ENCODE measurements at regions of chr11 and their contacts with region 1.

Region 1: GRCh38 chr11:62905927-62906531 is 15.1 kb downstream of the CHRM1 start:
- H3K4me3 ChIP-seq: no peak overlapping the region
- H3K27ac ChIP-seq: no peak overlapping the region
- H3K4me1 ChIP-seq: no peaks in the 10 kb centered on the region
- CTCF ChIP-seq: peak; percentile 96

Region 2: DNA sequence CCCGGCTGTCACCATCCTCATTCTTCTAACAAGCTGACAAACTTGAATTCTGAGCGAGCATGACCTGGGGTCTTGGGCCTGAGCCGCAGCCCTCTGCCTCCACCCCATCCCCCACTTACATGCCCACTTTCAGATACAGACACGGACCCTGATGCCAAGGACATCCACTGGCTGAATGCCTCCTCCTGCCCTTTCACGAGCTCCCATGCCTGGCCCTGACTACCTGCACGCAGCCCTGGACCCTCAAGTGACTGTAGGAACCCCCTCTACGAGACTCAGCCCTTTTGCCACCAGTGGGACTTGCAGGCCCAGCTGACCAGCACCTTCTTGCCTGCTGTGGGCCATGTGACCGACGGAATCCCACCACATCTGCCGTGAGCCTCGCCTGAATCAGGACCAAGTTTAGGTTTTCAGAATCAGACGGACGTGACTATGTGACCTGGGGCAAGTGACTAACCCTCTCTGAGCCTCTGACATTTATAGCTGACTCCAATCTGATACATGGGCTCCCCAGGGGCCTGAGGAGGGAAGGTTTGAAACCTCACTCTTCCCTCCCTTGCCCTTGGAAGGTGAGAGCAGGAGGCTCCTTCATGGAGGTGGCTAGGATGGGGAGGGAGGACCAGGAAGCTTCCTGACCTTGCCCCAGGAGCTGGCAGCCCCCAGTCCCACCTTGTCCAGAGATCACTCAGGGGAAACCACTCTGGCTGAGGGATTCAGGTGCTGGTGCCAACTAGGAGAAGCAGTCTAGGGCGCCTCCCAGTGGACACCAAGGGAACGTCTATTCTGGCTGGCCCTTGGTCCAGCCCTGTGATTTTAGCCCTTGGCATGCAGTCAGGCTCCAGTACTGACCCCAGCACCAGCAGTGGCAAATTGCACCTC is 1278.2 kb before region 1 on chr11:
- CTCF ChIA-PET with region 1: no interaction called
- POLR2A ChIA-PET with region 1: no interaction called
- H3K4me3 ChIP-seq: no peak overlapping the region
- H3K27ac ChIP-seq: no peak overlapping the region
- H3K4me1 ChIP-seq: no peaks in the 10 kb centered on the region
- CTCF ChIP-seq: 0 out of 2 replicates have a peak, but pooled peaks have one; percentile 31

Region 3: GRCh38 chr11:62678770-62679696 is 227.0 kb before region 1 on chr11 and contains the start of gene UBXN1:
- CTCF ChIA-PET with region 1: no interaction called
- POLR2A ChIA-PET with region 1: no interaction called
- H3K4me3 ChIP-seq: peak within 1 kb of the TSS; percentile 90
- H3K27ac ChIP-seq: peak within 1 kb of the TSS; percentile 62
- H3K4me1 ChIP-seq: peaks cover 8% of the 10 kb centered on the region
- CTCF ChIP-seq: no peak

Region 4: DNA sequence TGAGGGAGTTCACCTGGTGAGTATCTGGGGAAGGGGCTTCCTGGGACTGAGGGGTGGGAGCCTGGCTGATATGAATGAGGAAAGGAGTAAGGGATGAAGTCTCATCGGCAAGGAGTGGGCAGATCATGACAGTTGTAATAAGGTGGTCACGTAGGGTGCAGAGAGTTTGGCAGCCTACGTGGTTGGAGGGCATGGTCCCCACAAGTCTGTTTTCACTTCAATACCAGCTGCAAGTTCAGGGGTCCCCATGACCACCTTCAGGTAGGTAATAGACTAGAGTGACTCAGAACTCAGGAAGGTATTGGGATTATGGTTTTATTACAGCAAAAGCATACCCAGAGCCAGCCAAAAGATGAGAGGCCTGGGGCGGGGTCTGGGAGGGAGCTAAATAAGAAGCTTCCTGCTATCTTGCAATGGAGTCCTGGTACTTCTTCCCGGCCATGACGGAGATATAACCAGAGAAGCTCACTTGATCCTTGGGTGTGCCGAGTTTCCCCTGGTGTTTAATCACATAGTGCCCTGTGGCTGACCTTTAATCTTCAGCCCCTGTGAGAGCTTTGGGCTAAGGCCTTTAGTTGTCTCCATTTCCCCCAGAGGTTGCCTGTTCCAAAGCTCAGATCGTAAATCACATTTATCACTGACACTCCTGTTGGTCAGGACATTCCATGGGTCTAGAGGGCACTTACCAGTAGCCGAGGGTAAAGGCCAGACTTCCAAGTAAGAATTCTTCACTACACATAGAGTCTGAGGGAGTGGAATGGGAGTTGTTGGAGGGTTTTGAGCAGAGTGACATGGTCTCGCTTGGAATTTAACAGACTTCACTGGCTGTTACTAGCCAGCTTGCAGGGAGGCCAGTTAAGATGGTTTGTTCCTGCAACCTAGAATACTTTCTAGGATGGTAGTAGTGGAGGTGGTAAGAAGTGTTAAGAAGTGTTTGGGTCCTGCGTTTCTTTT is 16.3 kb before region 1 on chr11:
- CTCF ChIA-PET with region 1: interaction called, 22 read pairs
- POLR2A ChIA-PET with region 1: interaction called, 4 read pairs
- H3K4me3 ChIP-seq: no peak overlapping the region
- H3K27ac ChIP-seq: no peak overlapping the region
- H3K4me1 ChIP-seq: no peaks in the 10 kb centered on the region
- CTCF ChIP-seq: no peak

Region 5: GRCh38 chr11:62931499-62932278 is 25.7 kb after region 1 on chr11:
- CTCF ChIA-PET with region 1: interaction called, 13 read pairs
- POLR2A ChIA-PET with region 1: no interaction called
- H3K4me3 ChIP-seq: no peak overlapping the region
- H3K27ac ChIP-seq: no peak overlapping the region
- H3K4me1 ChIP-seq: no peaks in the 10 kb centered on the region
- CTCF ChIP-seq: no peak

Region 6: GRCh38 chr11:63007920-63008319 is 101.9 kb after region 1 on chr11:
- CTCF ChIA-PET with region 1: interaction called, 19 read pairs
- POLR2A ChIA-PET with region 1: no interaction called
- H3K4me3 ChIP-seq: no peak overlapping the region
- H3K27ac ChIP-seq: no peak overlapping the region
- H3K4me1 ChIP-seq: no peaks in the 10 kb centered on the region
- CTCF ChIP-seq: no peak

Region 7: DNA sequence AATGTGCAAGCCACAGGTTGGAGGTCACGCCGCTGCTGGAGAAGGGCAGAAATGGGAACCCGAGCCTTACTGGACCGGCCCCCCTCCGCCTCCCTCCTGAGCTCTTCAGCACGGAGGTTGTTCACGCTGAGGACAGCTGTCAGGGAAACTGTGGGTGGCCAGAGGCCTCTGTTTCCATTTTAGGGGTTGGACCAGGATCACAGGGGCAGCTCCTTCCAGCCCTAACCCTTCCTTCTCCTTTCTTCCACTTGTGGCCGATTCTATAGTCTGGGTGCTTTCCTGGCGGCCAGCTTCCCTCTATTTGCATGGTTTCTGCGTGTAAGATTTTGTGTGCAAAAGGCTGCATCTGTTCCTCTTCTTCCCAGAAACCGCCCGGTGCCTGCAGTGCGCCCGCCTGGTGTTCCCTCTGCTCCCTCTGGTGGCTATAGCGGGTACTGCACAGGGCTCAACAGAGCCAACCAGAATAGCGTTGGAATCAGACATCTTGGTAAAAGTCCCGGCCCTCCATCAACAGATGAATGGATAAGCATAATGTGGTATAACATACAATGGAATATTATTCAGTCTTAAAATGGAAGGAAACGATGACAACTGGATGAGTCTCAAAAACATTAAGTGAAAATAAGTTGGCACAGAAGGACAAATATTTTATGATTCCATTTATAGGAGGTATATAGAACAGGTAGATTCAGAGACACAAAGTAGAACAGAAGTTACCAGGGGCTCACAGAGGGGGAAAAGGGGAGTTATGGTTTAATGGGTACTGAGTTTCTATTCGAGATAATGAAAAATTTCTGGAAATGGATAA is 118.0 kb after region 1 on chr11:
- CTCF ChIA-PET with region 1: interaction called, 450 read pairs
- POLR2A ChIA-PET with region 1: interaction called, 6 read pairs
- H3K4me3 ChIP-seq: no peak overlapping the region
- H3K27ac ChIP-seq: no peak overlapping the region
- H3K4me1 ChIP-seq: no peaks in the 10 kb centered on the region; the same call in 1 of the 2 replicates
- CTCF ChIP-seq: peak; percentile 74

Region 8: GRCh38 chr11:63080682-63081081 is 174.7 kb after region 1 on chr11:
- CTCF ChIA-PET with region 1: no interaction called
- POLR2A ChIA-PET with region 1: no interaction called
- H3K4me3 ChIP-seq: no peak overlapping the region
- H3K27ac ChIP-seq: no peak overlapping the region
- H3K4me1 ChIP-seq: no peaks in the 10 kb centered on the region
- CTCF ChIP-seq: no peak

Region 9: GRCh38 chr11:63212742-63213141 is 306.7 kb after region 1 on chr11:
- CTCF ChIA-PET with region 1: interaction called, 25 read pairs
- POLR2A ChIA-PET with region 1: no interaction called
- H3K4me3 ChIP-seq: no peak overlapping the region
- H3K27ac ChIP-seq: no peak overlapping the region
- H3K4me1 ChIP-seq: no peaks in the 10 kb centered on the region
- CTCF ChIP-seq: no peak